ENCODE measurements at regions of chr7 and their contacts with region 1.

Region 1: DNA sequence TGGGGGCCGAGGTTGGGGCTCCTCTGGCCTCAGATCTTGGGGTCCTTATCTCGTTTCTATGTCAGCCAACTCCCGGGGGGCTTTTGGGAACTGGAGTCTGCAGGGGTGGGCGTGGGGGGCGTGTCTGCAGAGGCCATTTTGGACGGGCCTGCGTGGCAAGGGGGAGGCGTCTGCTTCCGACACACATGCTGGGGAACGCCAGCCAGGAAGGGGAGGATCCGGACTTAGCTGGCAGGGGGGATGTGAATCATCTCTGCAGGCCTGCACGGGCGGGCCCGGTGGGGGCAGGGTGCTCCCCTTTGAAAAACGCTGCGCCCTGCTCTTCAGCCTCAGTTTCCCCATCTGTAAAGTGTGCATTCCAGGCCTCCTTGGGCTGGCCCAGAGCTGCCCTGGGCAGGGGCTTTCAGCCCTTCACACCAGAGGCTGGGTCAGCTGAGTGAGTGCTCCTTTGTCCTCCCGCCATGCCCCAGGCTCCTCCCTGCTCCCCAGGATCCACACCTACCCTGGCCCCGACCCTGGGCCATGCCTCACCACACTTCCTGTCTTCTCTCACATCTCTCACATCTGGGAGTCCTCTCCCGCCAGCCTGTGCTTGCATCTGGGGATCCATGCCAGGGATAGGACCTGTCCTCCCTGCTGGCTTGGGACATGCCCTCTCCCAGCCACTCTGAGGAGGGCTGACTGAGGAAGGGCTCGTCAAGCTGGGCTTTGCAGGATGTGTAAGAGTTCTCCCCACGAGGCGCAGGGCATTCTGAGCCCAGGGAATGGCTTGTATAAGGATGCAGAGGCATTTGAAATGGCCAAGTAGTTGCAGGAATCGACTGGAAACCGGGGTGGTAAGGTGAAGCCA is 172.6 kb upstream of the TNRC18 start:
- DNase-seq: peak; percentile 97
- H3K4me3 ChIP-seq: peak overlapping the region; percentile 97
- H3K27ac ChIP-seq: peak overlapping the region; percentile 85
- H3K4me1 ChIP-seq: peaks cover 41% of the 10 kb centered on the region
- H3K27me3 ChIP-seq: no peaks in the 10 kb centered on the region
- CTCF ChIP-seq: no peak

Region 2: DNA sequence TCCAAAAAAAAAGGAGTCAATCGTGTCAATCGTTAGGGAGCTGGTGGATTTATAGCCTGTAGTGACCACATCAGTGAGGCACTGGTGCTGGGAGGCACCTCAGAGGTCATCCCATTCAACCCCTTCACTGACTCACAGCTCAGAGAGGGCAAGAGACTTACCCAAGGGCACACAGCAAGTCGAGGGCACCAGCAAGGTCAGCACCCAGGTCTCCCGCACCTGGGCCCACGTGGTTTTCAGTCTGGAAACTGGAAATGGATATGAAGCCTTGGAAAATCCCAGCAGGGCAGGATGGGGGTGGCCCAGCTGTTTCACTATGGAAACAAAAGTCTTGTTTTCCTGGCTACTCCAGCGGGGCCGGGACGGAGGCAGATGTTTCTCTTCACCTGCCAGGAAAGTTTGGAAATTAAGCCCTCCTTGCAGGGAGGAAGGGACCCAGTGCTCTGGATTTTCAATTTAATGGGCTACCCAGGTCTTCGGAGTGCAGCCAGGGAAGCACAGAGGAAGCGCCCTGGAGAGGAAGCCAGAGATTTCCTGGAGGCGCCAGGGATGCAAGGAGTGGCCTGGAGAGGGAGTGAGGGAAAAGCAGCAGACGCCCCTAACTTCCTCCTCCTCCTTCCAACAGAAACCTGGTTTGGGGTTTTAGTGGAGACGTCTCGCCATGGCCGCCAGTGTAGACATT is 15.4 kb before region 1 on chr7:
- CTCF ChIA-PET with region 1: no interaction called
- POLR2A ChIA-PET with region 1: no interaction called
- intact Hi-C with region 1: no loop called
- DNase-seq: no peak
- H3K4me3 ChIP-seq: no peak overlapping the region
- H3K27ac ChIP-seq: no peak overlapping the region
- H3K4me1 ChIP-seq: no peaks in the 10 kb centered on the region
- H3K27me3 ChIP-seq: no peaks in the 10 kb centered on the region
- CTCF ChIP-seq: no peak

Region 3: GRCh38 chr7:5615190-5616070 is 19.2 kb after region 1 on chr7:
- CTCF ChIA-PET with region 1: no interaction called
- POLR2A ChIA-PET with region 1: interaction called, 13 read pairs
- intact Hi-C with region 1: no loop called
- DNase-seq: no peak
- H3K4me3 ChIP-seq: no peak overlapping the region
- H3K27ac ChIP-seq: no peak overlapping the region
- H3K4me1 ChIP-seq: no peaks in the 10 kb centered on the region
- H3K27me3 ChIP-seq: no peaks in the 10 kb centered on the region
- CTCF ChIP-seq: no peak

Region 4: GRCh38 chr7:5780801-5781496 is 184.7 kb after region 1 on chr7:
- CTCF ChIA-PET with region 1: no interaction called
- POLR2A ChIA-PET with region 1: no interaction called
- intact Hi-C with region 1: no loop called
- DNase-seq: peak; percentile 52
- H3K4me3 ChIP-seq: peak overlapping the region; percentile 97
- H3K27ac ChIP-seq: peak overlapping the region; percentile 94
- H3K4me1 ChIP-seq: peaks cover 3% of the 10 kb centered on the region
- H3K27me3 ChIP-seq: no peaks in the 10 kb centered on the region
- CTCF ChIP-seq: no peak

Region 5: DNA sequence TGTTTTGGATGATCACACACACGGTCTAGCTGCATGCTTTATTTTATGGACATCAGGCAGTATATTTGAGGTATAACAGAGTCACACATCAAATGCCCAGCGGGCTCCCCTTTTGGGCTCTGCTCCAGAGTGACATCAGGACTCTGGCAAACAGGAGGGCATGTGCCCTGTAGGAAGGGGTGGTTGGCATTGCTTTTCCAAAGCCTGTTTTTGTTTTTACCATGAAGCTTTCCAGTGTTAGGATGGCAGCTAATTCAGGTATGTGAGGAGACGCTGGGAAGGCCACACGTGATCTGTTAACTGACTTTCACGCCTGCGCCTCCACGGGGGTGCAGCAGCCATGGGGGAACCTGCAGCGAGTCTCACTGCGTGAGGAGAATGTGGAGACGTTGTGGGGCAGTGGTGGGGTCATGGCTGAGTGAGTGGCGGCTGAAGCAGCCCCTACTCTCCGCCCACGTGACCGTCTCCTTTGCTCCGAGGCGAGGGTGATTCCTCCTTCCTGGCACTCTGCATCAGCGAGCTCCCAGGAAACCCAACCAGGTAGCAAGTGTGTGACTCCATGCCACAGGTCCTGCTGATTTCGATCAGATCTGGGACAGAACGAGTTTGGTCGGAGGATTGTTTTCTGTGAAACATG is 552.6 kb after region 1 on chr7:
- CTCF ChIA-PET with region 1: no interaction called
- POLR2A ChIA-PET with region 1: no interaction called
- intact Hi-C with region 1: no loop called
- DNase-seq: no peak
- H3K4me3 ChIP-seq: no peak overlapping the region
- H3K27ac ChIP-seq: no peak overlapping the region
- H3K4me1 ChIP-seq: no peaks in the 10 kb centered on the region
- H3K27me3 ChIP-seq: no peaks in the 10 kb centered on the region
- CTCF ChIP-seq: no peak